Activated CD4-positive, alpha-beta memory T cell treated with anti-CD3 and anti-CD28 coated beads, Interleukin-2, amount 10 ng/mL, durations not matched to agents 7 days and 5 days (primary cell): ENCODE measurements at regions of chr17 and their contacts with region 1.

Region 1: DNA sequence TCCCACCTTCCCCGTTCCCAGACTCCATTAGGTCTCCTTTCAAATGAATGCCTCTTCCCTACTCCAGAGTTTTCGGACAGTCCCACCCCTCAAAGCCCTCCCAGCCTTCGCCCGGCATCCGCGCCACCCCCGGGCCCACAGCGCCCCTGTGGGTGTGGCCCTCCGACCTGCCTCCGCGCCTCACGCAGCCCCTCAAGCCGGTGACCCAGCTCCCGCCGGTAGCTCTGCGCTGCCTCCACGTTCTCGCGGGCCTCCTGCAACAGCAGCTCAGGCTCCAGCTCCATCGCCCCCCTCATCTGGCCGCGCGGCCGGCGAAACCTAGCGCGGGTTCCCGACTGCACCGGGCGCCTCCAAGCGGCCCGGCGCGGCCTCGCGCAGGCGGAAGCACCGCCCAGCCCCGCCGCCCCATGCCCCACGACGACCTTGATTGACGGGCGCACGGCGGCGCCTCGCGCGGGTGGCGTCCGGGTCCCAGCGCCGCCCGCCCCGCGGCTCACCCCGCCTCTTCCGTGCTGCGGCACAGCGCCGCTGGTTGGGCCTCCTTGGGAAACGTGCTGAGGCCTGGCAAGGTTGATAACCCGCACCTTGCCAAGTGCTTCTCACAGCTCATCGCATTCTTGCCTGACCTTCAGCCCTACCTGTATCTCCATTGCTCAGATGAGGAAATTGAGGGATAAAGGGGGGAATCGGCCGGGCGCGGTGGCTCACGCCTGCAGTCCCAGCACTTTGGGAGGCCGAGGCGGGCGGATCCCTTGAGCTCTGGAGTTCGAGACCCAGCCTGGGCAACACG is at the start of gene CRLF3:
- DNase-seq: peak; percentile 93
- H3K4me3 Mint-ChIP-seq: peak within 1 kb of the TSS; percentile 94
- H3K27ac Mint-ChIP-seq: peak within 1 kb of the TSS; percentile 74
- H3K4me1 Mint-ChIP-seq: peaks cover 42% of the 10 kb centered on the region
- H3K27me3 Mint-ChIP-seq: no peaks in the 10 kb centered on the region
- total RNA-seq, gene CRLF3: 70.1 to 76.2 TPM

Region 2: GRCh38 chr17:30788918-30789317 is 35.6 kb before region 1 on chr17:
- CTCF ChIA-PET with region 1: interaction called, 20 read pairs
- POLR2A ChIA-PET with region 1: interaction called, 14 read pairs
- DNase-seq: no peak
- H3K4me3 Mint-ChIP-seq: no peak overlapping the region
- H3K27ac Mint-ChIP-seq: peak overlapping the region; percentile 5
- H3K4me1 Mint-ChIP-seq: peaks cover 15% of the 10 kb centered on the region
- H3K27me3 Mint-ChIP-seq: no peaks in the 10 kb centered on the region

Region 3: GRCh38 chr17:30796016-30796415 is 28.5 kb before region 1 on chr17:
- CTCF ChIA-PET with region 1: interaction called, 20 read pairs
- POLR2A ChIA-PET with region 1: interaction called, 16 read pairs
- DNase-seq: no peak
- H3K4me3 Mint-ChIP-seq: no peak overlapping the region
- H3K27ac Mint-ChIP-seq: peak overlapping the region; percentile 38
- H3K4me1 Mint-ChIP-seq: peaks cover 16% of the 10 kb centered on the region
- H3K27me3 Mint-ChIP-seq: no peaks in the 10 kb centered on the region

Region 4: GRCh38 chr17:30808785-30809286 is 15.7 kb before region 1 on chr17:
- CTCF ChIA-PET with region 1: interaction called, 185 read pairs
- POLR2A ChIA-PET with region 1: interaction called, 256 read pairs
- DNase-seq: peak; percentile 55
- H3K4me3 Mint-ChIP-seq: peak overlapping the region; percentile 82
- H3K27ac Mint-ChIP-seq: peak overlapping the region; percentile 100
- H3K4me1 Mint-ChIP-seq: peaks cover 65% of the 10 kb centered on the region
- H3K27me3 Mint-ChIP-seq: no peaks in the 10 kb centered on the region